H1 (cell line): ENCODE measurements at regions of chr20 and their contacts with region 1.

Region 1: GRCh38 chr20:57654363-57654997 is 34.3 kb upstream of the ZBP1 start:
- DNase-seq: peak; percentile 53 to 84
- H3K4me3 ChIP-seq: no peak overlapping the region
- H3K27ac ChIP-seq: no peak overlapping the region
- H3K4me1 ChIP-seq: peaks cover 0 to 4% (median 2%) of the 10 kb centered on the region in 4 experiments; a peak in 3 of 7 replicates
- H3K27me3 ChIP-seq: no peaks in the 10 kb centered on the region
- CTCF ChIP-seq: peak; percentile 87 to 96 (median 91)
- EP300 ChIP-seq: no peak
- POLR2A ChIP-seq: no peak
- RAD21 ChIP-seq: peak; percentile 94 to 96

Region 2: DNA sequence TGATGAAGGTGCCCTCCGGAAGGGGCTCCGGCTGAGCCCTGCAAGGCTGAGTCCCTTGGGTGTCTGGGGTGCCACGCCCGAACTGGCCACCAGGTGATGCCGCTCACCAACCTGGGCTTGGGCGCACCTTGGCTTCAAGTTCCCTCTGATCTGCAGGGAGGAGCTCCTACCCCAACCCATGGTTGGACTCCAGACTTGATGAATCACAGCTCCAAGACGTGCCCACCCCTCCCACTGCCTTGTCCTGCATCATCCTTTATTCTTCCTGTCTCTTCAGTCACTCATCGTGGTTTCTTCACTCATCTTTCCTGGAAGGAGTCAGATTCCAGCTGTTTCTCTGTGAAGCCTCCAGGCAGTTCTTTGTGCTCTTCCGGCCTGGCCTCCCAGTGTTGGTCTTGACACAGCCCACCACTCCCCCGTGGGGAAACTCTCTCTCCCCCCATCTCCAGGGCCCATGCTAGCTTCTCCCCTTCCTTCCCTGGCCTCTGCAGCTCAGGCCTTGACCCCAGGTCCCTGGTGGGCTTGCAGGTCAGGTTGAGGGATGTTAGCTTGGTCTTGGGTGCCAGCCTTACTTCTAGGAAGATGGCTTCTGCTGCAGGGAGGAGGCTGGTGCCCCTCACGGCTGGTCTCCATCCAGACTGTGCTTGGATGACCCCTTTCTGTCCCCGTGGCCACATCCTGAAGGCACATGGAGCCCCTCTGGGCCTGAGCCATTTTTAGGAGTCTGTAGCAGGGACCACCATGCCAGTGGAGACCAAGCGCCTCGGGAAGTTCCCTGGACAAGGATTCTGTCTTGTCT is 31.7 kb before region 1 on chr20:
- CTCF ChIA-PET with region 1: interaction called, 19 read pairs
- POLR2A ChIA-PET with region 1: no interaction called
- DNase-seq: peak; percentile 38 to 90
- H3K4me3 ChIP-seq: no peak overlapping the region
- H3K27ac ChIP-seq: no peak overlapping the region
- H3K4me1 ChIP-seq: no peaks in the 10 kb centered on the region
- H3K27me3 ChIP-seq: no peaks in the 10 kb centered on the region
- CTCF ChIP-seq: peak; percentile 93 to 98 (median 95)
- EP300 ChIP-seq: no peak
- POLR2A ChIP-seq: no peak
- RAD21 ChIP-seq: peak; percentile 96 to 97

Region 3: GRCh38 chr20:57680131-57680716 is 25.7 kb after region 1 on chr20:
- CTCF ChIA-PET with region 1: interaction called, 28 read pairs
- POLR2A ChIA-PET with region 1: no interaction called
- DNase-seq: no peak
- H3K4me3 ChIP-seq: no peak overlapping the region
- H3K27ac ChIP-seq: no peak overlapping the region
- H3K4me1 ChIP-seq: peaks cover 17 to 54% (median 23%) of the 10 kb centered on the region in 4 experiments
- H3K27me3 ChIP-seq: no peaks in the 10 kb centered on the region
- CTCF ChIP-seq: no peak
- EP300 ChIP-seq: no peak
- POLR2A ChIP-seq: no peak
- RAD21 ChIP-seq: no peak

Region 4: GRCh38 chr20:57698117-57698866 is 43.8 kb after region 1 on chr20:
- CTCF ChIA-PET with region 1: interaction called, 11 read pairs
- POLR2A ChIA-PET with region 1: no interaction called
- DNase-seq: no peak
- H3K4me3 ChIP-seq: no peak overlapping the region
- H3K27ac ChIP-seq: no peak overlapping the region
- H3K4me1 ChIP-seq: peaks cover 0 to 10% (median 6%) of the 10 kb centered on the region in 4 experiments; a peak in 5 of 7 replicates
- H3K27me3 ChIP-seq: no peaks in the 10 kb centered on the region
- CTCF ChIP-seq: no peak
- EP300 ChIP-seq: no peak
- POLR2A ChIP-seq: no peak
- RAD21 ChIP-seq: no peak

Region 5: GRCh38 chr20:57709931-57710799 is 55.7 kb after region 1 on chr20 and contains the start of gene PMEPA1:
- CTCF ChIA-PET with region 1: interaction called, 20 read pairs
- POLR2A ChIA-PET with region 1: interaction called, 3 read pairs
- DNase-seq: peak; percentile 84 to 94
- H3K4me3 ChIP-seq: peak within 1 kb of the TSS; percentile 80 to 83 (median 82)
- H3K27ac ChIP-seq: peak within 1 kb of the TSS; percentile 61
- H3K4me1 ChIP-seq: peaks cover 0 to 24% (median 13%) of the 10 kb centered on the region in 4 experiments; a peak in 5 of 7 replicates
- H3K27me3 ChIP-seq: peaks cover 0 to 18% (median 10%) of the 10 kb centered on the region in 4 experiments; a peak in 5 of 7 replicates
- CTCF ChIP-seq: no peak
- EP300 ChIP-seq: peak in 1 of 2 experiments; percentile 95; a peak in 2 of 3 replicates
- POLR2A ChIP-seq: peak in 1 of 2 experiments; percentile 50; a peak in 1 of 3 replicates
- RAD21 ChIP-seq: no peak
- total RNA-seq, gene PMEPA1: 20.0 and 20.5 TPM in 2 replicates